Posterior cingulate gyrus (tissue), 11 donors: ENCODE measurements at regions of chr17 and their contacts with region 1.

Region 1: DNA sequence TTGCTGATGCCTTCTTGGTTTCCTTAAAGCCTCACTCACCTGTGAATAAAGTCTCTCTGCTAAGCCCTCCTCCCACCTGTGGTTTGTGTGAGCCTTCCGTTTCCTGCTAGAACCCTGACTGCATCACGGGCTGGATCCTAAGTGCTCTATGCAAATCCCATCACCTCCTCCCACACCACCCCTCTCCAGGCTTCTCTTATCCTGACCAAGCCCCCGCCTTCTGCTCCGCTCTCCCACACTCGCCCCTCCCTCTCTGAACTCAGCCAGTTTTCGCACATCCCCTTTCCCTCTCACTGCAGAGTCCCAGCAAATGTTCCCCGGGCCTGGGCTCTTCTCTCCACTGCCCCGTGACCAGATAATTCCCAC is 51.8 kb downstream of the PIMREG start:
- DNase-seq: peak in 3 of 10 donors; percentile 64 to 84 (median 83)

Region 2: GRCh38 chr17:6443692-6444569 is 52.2 kb before region 1 on chr17 and contains the start of gene PIMREG:
- intact Hi-C with region 1: no loop called
- DNase-seq: peak; percentile 90 to 99 (median 96)

Region 3: DNA sequence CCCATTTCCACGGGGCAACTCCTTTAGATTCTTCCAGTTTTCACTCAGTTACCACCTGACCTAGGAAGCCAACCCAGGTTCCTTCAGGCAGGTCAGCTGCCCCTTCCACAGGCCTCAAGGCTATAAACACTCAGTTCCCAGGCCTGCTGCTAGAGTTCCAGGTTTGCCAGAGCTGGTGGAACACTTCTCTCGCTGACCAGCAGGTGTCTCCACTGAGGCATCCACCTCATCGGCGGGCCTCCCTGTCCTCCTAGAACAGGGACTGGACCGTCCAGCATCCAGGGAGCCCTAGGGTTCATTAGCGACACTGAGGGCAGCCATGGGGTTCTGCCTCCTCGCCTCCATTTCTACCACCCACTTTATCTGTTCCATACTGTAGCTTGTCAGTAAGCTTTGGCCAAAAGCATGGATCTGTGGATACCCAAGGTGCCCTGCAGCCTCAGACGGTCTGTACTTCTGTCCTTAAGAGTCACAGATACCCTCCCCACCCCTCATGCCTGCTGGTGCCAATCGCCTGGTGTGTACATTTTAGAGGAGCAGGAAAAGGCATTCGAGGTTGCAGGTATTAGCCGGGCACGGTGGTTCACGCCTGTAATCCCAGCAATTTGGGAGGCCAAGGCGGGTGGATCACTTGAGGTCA is 22.9 kb before region 1 on chr17:
- intact Hi-C with region 1: no loop called
- DNase-seq: peak; percentile 59 to 97 (median 85)

Region 4: DNA sequence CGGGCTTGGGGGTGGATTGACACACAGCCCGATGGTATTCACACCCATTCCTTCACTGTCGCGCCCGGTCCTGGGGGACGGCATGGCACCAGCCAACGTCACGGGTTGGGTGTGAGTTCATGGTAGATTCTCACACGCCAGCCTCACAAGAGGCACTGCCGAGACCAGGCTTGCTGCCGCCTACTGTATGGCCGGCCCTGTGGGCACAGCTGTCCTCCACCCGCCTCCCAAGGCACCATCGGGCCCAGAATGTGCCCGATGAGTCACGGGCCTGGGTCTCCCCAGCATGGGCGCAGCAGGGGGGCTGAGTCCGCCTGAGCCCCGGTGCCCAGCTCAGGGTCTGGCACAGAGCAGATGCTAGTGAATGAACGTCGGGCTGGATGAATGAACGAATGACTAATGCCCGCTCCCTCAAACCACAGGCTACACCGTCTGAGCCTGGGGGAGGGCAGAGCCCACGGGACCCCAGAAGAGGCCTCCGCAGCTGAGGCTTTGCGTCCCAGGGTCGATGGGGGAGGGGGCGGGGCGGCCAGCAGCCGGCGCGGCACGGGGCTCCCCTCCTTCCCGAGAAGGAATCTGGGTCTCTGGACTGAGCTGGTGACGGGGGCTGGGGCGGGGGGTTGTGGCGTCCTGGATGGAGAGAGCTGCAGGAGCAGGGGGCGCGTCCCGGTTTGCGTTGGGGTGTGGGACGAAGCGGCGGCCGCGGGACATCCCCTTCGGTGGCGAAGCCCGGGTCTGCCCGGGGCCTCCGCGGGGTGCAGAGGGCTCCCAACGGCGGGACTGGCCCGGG is 59.4 kb after region 1 on chr17:
- intact Hi-C with region 1: loop called (anchors 10 kb)
- DNase-seq: peak in 8 of 10 donors; percentile 21 to 93 (median 58)